T-cell (primary cell): ENCODE measurements at regions of chr13 and their contacts with region 1.

Region 1: GRCh38 chr13:39496440-39497010 is 106.5 kb downstream of the LHFPL6 start:
- DNase-seq: no peak
- ATAC-seq: no peak
- H3K4me3 ChIP-seq: no peak overlapping the region
- H3K4me3 Mint-ChIP-seq: no peak overlapping the region
- H3K27ac ChIP-seq: no peak overlapping the region
- H3K27ac Mint-ChIP-seq: no peak overlapping the region
- H3K4me1 ChIP-seq: no peaks in the 10 kb centered on the region
- H3K4me1 Mint-ChIP-seq: no peaks in the 10 kb centered on the region
- H3K27me3 ChIP-seq: no peaks in the 10 kb centered on the region
- H3K27me3 Mint-ChIP-seq: peaks cover 0 to 18% of the 10 kb centered on the region in 2 donors

Region 2: DNA sequence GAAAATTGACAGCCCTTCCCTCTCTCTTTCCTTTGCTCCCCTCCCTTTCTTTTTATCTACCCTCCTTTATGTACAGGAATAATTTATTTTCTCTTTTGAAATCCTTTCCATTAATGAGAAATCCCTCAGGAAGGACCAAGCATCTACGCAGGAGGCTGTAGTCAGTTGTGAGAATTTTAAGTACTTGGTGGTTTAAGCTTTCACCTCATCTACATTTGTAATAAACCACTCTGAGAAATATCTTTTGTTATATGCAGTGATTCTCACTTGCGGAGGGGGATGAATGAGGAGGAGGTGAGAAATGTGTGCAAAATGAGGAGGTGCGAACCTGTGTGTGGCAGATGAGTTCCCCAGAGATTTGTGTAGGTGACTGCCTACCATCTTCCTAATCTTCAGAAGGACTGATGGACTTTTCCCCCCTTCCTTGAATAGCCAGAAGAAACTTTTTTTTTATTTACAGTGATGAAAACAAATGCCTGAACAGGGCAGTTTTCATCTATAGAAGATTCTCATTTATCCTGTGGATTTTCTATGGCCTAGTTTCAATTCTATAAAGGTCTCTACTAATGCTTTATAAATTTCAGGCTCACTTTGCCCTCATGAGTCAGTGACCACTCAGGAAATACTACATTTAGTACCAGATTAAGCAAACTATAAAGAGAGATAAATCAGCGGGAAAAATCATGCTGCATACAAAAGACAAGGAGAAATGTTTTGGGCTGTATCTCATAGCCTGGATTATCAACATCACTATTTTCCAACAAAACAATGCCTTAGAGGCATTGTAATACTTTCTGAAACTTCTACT is 11.8 kb before region 1 on chr13:
- CTCF ChIA-PET with region 1: no interaction called
- POLR2A ChIA-PET with region 1: no interaction called
- DNase-seq: no peak
- ATAC-seq: no peak
- H3K4me3 ChIP-seq: no peak overlapping the region
- H3K4me3 Mint-ChIP-seq: no peak overlapping the region
- H3K27ac ChIP-seq: no peak overlapping the region
- H3K27ac Mint-ChIP-seq: no peak overlapping the region
- H3K4me1 ChIP-seq: no peaks in the 10 kb centered on the region
- H3K4me1 Mint-ChIP-seq: no peaks in the 10 kb centered on the region
- H3K27me3 ChIP-seq: no peaks in the 10 kb centered on the region
- H3K27me3 Mint-ChIP-seq: peaks cover 3% of the 10 kb centered on the region in 2 donors

Region 3: GRCh38 chr13:39506559-39507390 is 10.2 kb after region 1 on chr13:
- CTCF ChIA-PET with region 1: interaction called in 1 of 2 experiments, 6 read pairs
- POLR2A ChIA-PET with region 1: interaction called, 3 to 10 read pairs
- DNase-seq: no peak
- ATAC-seq: no peak
- H3K4me3 ChIP-seq: no peak overlapping the region
- H3K4me3 Mint-ChIP-seq: no peak overlapping the region
- H3K27ac ChIP-seq: no peak overlapping the region
- H3K27ac Mint-ChIP-seq: no peak overlapping the region
- H3K4me1 ChIP-seq: no peaks in the 10 kb centered on the region
- H3K4me1 Mint-ChIP-seq: no peaks in the 10 kb centered on the region
- H3K27me3 ChIP-seq: no peaks in the 10 kb centered on the region
- H3K27me3 Mint-ChIP-seq: peaks cover 4 to 14% of the 10 kb centered on the region in 2 donors

Region 4: DNA sequence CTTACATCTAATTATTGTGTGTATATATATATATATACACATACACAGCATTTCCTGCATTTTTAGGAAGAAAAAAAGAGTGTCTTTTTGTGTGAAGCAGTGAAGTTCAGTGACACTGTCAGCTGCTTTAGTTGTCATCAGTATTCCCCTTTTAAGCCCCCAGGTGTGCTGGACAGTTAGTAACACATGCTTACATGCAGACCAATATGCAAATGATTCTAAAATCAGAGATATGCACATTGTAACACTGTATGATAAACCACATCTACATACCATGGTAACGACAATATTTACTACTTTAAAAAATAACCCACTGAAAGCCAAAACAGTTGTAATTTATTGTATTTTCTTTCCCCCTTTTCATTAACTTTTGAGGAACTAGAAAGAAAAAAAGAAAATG is 89.6 kb after region 1 on chr13:
- CTCF ChIA-PET with region 1: no interaction called
- POLR2A ChIA-PET with region 1: no interaction called
- DNase-seq: no peak
- ATAC-seq: no peak
- H3K4me3 ChIP-seq: no peak overlapping the region
- H3K4me3 Mint-ChIP-seq: no peak overlapping the region
- H3K27ac ChIP-seq: no peak overlapping the region
- H3K27ac Mint-ChIP-seq: no peak overlapping the region
- H3K4me1 ChIP-seq: no peaks in the 10 kb centered on the region
- H3K4me1 Mint-ChIP-seq: no peaks in the 10 kb centered on the region
- H3K27me3 ChIP-seq: no peaks in the 10 kb centered on the region
- H3K27me3 Mint-ChIP-seq: peaks cover 5 to 12% of the 10 kb centered on the region in 2 donors